HEK293 (cell line): ENCODE measurements at regions of chr9 and their contacts with region 1.

Region 1: DNA sequence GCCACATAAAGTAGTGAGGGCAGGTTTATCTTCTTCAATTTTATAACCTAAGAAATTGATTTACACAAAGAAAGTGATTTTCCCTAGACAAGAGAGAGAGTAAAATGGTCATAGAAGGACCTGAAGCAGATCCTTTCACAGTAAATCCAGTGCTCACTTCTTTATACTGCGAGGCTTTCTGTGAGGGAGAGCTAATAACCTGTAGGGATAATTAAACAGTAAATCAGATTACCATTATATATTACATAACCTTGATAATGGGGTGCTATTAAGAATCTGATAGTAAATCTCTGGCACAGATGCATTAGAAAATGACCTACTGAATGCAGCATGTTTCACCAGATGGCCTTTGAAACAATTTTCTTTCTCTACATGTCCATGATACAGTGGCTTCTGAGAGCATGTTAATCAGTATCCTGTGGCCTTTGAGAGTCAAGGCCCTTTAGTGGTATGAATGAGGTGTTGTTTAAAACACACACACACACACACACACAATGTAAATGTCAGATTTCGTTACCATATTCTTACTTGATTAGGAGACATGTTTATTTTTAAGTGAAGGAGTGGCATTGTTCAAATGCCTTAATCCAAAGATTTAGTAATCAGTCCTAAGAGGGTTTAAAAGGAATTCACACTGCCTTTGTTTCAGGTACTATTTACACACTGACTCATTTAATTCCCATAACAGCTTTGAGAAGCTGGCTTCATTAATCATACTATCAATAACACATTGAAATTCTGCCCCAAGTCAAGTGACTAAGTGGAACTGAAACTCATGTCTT is 124.7 kb downstream of the ALDH1A1 start:
- H3K4me3 ChIP-seq: no peak overlapping the region
- H3K27ac ChIP-seq: no peak overlapping the region
- H3K4me1 ChIP-seq: peaks cover 2% of the 10 kb centered on the region
- CTCF ChIP-seq: no peak

Region 2: DNA sequence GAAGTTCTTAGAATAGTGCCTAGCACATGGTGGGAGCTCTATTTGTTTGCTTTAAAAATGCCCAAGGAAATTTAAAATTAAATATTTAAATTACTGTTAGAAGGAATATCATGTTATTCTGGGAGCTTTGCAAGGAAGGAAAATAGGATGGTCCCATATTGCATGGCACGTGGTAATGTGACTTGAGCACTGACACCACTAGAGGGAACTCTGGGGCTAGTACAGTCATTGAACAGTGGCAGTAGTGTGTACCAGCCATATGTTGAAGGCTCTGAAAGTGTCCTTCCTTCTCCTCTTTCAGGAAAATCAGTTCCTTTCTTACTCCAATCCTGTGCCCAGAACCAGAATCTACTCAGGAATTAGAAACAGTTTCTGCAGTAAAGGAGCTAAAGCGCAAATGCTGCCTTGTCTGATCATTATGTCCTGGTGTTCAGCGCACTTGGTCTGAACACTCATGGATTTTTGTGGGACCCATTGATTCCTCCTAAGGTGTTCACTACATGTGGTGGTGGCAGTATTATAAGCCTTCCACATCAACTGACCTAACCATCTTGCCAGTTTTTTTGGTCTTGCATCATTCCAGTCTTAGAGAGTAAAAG is 624.8 kb before region 1 on chr9:
- CTCF ChIA-PET with region 1: interaction called, 19 read pairs
- POLR2A ChIA-PET with region 1: no interaction called
- H3K4me3 ChIP-seq: no peak overlapping the region
- H3K27ac ChIP-seq: no peak overlapping the region
- H3K4me1 ChIP-seq: no peaks in the 10 kb centered on the region
- CTCF ChIP-seq: peak; percentile 28; the same call in 1 of the 2 replicates

Region 3: DNA sequence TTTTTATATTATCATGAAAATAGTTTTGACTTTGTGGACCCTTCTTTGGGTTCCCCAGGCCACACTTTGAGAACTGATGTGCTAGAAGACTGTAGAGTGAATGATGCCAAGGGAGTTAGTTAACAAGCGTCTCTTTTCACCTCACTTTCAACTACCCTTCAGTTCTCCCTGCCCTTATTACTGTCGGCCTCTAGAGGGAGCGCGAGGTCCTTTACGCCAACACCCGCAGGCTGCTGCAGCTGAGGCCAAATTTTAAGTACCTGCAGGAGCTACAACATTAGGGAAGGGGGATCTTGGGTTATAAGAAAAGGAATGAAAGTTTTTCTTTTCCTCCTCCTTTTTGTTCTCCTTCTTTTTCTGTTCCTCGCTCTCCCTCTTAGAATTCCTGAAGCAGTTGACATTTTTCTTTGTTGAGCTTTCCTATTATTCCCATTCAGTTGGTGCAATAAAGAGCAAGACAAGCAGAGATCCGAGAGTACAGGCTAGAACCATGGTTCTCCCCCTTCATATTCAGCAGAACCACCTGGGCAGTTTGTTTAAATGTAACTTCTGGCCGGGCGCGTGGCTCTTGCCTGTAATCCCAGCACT is 547.1 kb before region 1 on chr9:
- CTCF ChIA-PET with region 1: interaction called, 114 read pairs
- POLR2A ChIA-PET with region 1: no interaction called
- H3K4me3 ChIP-seq: no peak overlapping the region
- H3K27ac ChIP-seq: no peak overlapping the region
- H3K4me1 ChIP-seq: no peaks in the 10 kb centered on the region
- CTCF ChIP-seq: peak; percentile 59; the same call in 1 of the 2 replicates

Region 4: DNA sequence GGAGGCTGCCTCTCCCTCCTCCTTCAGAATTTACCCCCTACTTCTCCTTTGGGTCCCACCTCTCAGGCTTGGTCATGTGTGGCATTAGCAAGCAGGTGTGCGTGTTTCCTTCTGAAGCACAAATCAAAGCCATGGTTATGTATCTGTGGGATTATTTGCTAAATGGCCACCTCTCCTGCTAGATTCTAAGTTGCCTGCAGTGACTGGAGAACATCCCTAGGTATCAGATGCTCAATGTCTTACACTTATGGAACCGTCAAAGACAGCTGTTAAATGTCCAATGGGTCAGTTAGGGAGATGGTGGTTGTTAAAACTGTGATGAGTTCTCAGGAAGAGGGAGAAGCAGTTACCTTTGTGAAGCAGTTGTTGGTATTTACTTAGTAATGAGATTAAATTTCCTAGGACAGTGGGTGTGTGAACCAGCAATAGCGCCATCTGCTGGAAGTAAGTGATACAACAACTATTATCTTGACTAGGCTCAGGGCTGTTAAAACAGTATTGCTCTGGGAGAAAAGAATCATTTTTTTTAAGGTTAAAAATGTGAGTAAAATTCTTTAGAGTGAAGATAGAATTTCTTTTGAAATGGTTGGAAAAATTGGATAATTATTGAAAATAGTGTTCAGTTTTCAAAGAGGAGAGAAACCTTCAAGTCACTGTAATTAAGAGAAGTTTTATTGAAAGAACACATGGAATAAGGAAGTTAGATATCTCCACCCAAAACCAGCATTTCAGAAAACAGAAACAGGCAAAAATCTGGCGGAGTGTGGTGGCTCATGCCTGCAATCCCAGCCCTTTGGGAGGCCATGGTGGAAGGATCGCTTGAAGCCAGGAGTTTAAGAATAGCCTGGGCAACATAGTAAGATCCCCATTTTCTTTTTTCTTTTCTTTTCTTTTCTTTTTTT is 235.4 kb before region 1 on chr9:
- CTCF ChIA-PET with region 1: interaction called, 10 read pairs
- POLR2A ChIA-PET with region 1: no interaction called
- H3K4me3 ChIP-seq: no peak overlapping the region
- H3K27ac ChIP-seq: no peak overlapping the region
- H3K4me1 ChIP-seq: no peaks in the 10 kb centered on the region
- CTCF ChIP-seq: 0 out of 2 replicates have a peak, but pooled peaks have one; percentile 6